Cardiac septum (tissue), 1 donor: ENCODE measurements at regions of chr3 and their contacts with region 1.

Region 1: DNA sequence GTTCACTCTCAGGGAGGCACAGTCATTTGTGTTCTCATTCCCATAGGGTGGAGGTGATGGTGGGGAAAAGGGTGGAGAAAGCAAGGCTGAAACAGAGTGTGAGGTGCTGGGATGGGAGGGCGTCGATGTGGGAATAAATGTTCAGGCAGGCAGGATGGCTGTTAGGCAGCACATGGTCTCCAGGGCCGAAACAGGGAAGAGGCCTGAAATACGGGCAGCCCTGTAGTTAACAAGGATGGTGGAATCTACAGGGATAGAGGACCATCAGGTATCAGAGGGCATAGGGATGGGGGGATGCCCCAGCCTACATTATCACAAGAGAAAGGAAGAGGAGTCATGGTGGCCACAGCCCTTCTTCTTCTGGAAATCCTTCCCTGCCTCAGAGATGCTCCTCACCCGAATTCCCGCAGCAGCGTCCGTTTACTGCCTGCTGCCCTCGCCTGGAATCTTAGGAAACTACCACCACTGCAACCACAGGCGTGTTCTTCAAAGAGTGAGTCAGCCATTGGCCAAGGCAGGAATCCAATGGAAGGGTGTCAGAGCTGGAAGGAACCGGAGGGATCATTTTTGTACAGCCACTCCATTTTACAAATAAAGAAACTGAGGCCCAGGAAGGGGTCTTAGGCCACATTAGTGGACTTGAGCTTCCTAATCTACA is 49.7 kb upstream of the POMGNT2 start:
- DNase-seq: no peak

Region 2: GRCh38 chr3:42961633-42962032 is 194.0 kb before region 1 on chr3:
- intact Hi-C with region 1: loop called (anchors 2 kb)
- DNase-seq: no peak